ENCODE measurements at regions of chr1 and their contacts with region 1.

Region 1: GRCh38 chr1:202692959-202693555 is 17.2 kb downstream of the SYT2 start:
- DNase-seq: peak; percentile 53 to 71
- ATAC-seq: peak; percentile 76 to 83
- H3K4me3 ChIP-seq: no peak overlapping the region
- H3K27ac ChIP-seq: no peak overlapping the region
- H3K4me1 ChIP-seq: no peaks in the 10 kb centered on the region
- CTCF ChIP-seq: no peak
- EP300 ChIP-seq: no peak
- POLR2A ChIP-seq: no peak
- RAD21 ChIP-seq: no peak

Region 2: DNA sequence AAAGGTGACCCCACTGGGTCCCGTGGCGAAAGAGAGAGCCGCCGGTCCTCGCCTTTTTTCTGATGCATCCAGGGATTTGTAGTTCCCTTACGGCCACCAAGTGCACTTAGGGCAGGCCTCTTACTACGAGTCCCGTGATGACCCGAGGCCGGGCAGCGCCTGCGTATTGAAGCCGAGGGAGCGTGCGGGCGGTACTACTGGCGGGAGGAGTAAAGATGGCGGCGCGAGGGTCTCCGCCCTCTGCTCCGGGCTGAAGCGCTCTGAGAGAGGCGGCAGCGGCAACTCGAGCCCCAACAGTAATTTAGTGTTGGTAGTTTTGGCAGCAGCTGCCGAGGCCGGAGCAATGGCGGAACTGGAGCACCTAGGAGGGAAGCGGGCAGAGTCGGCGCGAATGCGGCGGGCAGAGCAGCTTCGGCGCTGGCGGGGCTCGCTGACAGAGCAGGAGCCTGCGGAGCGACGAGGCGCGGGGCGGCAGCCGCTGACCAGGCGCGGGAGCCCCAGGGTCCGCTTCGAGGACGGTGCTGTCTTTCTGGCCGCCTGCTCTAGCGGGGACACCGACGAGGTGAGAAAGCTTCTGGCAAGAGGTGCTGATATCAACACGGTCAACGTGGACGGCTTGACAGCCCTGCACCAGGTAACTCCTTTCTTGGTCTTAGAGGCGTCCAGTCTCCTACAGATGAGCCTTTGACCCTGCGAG is 344.4 kb before region 1 on chr1 and contains the start of gene PPP1R12B:
- CTCF ChIA-PET with region 1: no interaction called
- POLR2A ChIA-PET with region 1: no interaction called
- DNase-seq: peak; percentile 86 to 99
- ATAC-seq: peak; percentile 98 to 99
- H3K4me3 ChIP-seq: peak within 1 kb of the TSS; percentile 86
- H3K27ac ChIP-seq: peak within 1 kb of the TSS; percentile 87 to 92
- H3K4me1 ChIP-seq: peaks cover 38% of the 10 kb centered on the region
- CTCF ChIP-seq: no peak
- EP300 ChIP-seq: no peak
- POLR2A ChIP-seq: peak; percentile 77
- RAD21 ChIP-seq: 0 out of 5 replicates have a peak, but pooled peaks of 1 of the 2 experiments have one; percentile 16
- polyA plus RNA-seq, gene PPP1R12B: 12.1 and 14.8 TPM in 2 replicates

Region 3: GRCh38 chr1:202661123-202661845 is 31.8 kb before region 1 on chr1:
- CTCF ChIA-PET with region 1: interaction called, 13 read pairs
- POLR2A ChIA-PET with region 1: no interaction called
- DNase-seq: peak; percentile 31 to 53
- ATAC-seq: peak; percentile 61 to 79; a peak in 5 of 6 replicates
- H3K4me3 ChIP-seq: no peak overlapping the region
- H3K27ac ChIP-seq: no peak overlapping the region
- H3K4me1 ChIP-seq: no peaks in the 10 kb centered on the region
- CTCF ChIP-seq: peak; percentile 2; the same call in 1 of the 3 replicates
- EP300 ChIP-seq: no peak
- POLR2A ChIP-seq: no peak
- RAD21 ChIP-seq: peak in 1 of 2 experiments; percentile 37; a peak in 2 of 5 replicates